ENCODE measurements at regions of chr2 and their contacts with region 1.

Region 1: GRCh38 chr2:219459460-219460311 is 25.0 kb downstream of the SPEG start:
- DNase-seq: peak; percentile 64
- H3K4me3 ChIP-seq: peak overlapping the region; percentile 64
- H3K27ac ChIP-seq: peak overlapping the region; percentile 87
- H3K4me1 ChIP-seq: peaks cover 52% of the 10 kb centered on the region
- H3K27me3 ChIP-seq: peaks cover 16% of the 10 kb centered on the region
- CTCF ChIP-seq: peak; percentile 92

Region 2: DNA sequence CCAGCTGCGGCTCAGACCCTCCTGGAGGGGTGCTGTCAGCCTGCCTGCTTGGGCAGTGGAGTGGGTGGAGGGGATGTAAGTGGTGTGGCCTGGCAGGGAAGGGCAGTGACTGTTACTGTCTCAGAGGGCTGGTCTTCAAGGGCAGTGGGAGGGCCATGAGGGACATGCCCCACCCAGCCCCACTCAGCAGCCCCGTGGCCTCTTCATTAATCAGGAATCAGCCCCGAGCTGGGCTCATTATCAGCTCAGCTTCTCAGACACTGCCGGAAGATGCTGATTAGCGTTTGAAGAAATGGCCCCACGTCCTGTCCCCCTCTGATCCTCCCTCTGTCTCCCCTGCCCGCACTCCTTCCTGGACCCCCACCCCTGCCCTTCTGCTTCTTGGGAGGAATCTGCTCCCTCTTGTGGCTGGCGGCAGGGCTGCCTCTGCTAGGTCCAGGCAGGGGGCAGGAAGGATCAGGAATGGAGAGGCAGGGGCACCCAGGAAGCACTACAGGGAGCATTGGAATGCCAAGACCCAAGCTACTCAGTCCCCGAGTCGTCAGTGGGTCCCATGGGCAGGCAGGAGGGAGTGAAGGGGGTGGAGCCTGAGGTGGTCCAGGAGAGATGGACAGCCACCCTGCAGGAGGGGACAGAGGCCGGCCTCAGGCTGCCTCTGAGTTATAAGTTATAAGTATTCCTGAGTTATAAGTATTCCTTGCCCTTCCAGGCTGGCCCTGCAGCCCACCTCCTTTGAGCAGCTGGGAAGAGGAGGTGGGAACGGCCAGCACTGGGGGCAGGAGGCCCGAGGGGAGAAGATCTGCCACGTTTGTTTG is 61.6 kb after region 1 on chr2:
- intact Hi-C with region 1: loop called (anchors 10 kb)
- DNase-seq: no peak
- H3K4me3 ChIP-seq: peak overlapping the region; percentile 32
- H3K27ac ChIP-seq: peak overlapping the region; percentile 47
- H3K4me1 ChIP-seq: peaks cover 35% of the 10 kb centered on the region
- H3K27me3 ChIP-seq: peaks cover 98% of the 10 kb centered on the region
- CTCF ChIP-seq: peak; percentile 68